Right cardiac atrium (tissue), 5 donors: ENCODE measurements at regions of chr9 and their contacts with region 1.

Region 1: GRCh38 chr9:96818535-96818934 is 35.8 kb downstream of the ZNF782 start:
- DNase-seq: no peak
- ATAC-seq: no peak
- H3K4me3 ChIP-seq: peak overlapping the region; percentile 5
- H3K27ac ChIP-seq: no peak overlapping the region
- H3K4me1 ChIP-seq: no peaks in the 10 kb centered on the region
- H3K27me3 ChIP-seq: no peaks in the 10 kb centered on the region

Region 2: DNA sequence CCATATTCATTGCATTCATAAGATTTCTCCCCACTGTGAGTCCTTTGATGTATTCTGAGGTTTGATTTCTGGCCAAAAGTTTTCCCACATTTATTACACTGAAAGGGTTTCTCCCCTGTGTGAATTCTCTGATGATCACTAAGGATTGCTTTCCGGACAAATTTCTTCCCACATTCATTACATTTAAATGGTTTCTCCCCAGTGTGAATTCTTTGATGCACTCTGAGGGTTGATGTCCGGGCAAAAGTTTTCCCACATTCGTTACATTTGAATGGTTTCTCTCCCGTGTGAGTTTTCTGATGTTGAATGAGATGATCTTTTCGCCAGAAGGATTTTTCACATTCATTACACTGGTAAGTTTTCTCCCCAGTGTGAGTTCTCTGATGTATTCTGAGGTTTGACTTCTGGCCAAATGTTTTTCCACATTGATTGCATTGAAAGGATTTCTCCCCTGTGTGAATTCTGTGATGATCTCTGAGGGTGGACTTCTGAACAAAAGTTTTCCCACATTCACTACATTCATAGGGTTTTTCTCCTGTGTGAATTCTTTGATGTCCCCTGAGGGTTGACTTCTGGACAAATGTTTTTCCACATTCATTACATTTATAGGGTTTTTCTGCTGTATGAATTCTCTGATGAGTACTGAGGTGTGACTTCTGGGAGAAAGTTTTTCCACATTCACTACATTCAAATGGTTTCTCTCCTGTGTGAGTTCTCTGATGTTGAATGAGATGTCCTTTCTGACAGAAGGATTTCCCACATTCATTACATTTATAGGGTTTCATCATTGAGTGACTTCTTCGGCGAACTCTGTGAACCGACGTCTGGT is 59.5 kb before region 1 on chr9:
- intact Hi-C with region 1: loop called in 3 of 4 experiments (anchors 10 kb)
- DNase-seq: no peak
- ATAC-seq: no peak
- H3K4me3 ChIP-seq: peak overlapping the region; percentile 47
- H3K27ac ChIP-seq: no peak overlapping the region
- H3K4me1 ChIP-seq: no peaks in the 10 kb centered on the region
- H3K27me3 ChIP-seq: no peaks in the 10 kb centered on the region